ENCODE measurements at regions of chr9 and their contacts with region 1.

Region 1: DNA sequence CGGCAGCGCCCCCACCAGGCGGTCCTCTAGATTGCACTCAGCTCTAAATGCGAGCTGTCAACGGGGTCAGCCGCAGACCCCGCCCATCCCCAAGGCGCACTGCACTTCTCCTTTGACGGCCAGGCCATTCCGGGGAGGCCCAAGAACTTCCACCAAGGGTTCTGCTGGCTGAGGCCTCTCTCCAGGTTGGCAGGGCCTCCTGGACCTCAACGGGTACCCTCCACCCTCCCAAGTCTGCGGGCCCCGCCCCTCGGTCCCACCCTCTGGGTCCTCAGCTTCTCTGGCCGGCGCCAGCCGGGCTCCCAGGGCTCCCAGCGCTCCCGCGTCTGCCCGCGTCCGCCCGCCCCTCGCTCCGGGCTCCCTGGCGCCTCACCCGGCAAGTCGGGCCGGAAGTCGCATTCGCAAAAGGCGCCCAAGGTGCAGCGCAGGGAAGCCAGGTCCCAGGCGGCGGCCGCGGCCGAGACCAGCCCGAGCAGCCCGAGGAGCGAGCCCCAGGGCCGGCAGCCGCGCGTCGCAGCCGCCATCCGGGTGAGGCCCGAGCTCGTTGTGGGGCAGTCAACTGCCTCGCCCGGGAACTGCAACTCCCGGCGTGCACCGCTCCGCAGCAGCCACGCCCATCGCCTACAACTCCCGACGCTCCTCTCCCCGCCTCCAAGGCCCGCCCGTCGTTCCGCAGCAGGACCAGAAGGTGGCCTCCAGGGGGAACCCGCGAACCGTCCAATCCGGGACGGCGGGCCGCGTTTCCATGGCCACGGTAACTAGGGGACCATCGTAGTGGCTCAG is at the start of gene TOR2A:
- DNase-seq: peak; percentile 98 to 100 (median 99)
- H3K4me3 ChIP-seq: peak within 1 kb of the TSS; percentile 30 to 74
- H3K4me3 Mint-ChIP-seq: peak within 1 kb of the TSS; percentile 85 to 98 (median 92)
- H3K27ac ChIP-seq: peak within 1 kb of the TSS; percentile 80
- H3K27ac Mint-ChIP-seq: peak within 1 kb of the TSS; percentile 88 to 99 (median 97)
- H3K4me1 ChIP-seq: peaks cover 18% of the 10 kb centered on the region
- H3K4me1 Mint-ChIP-seq: peaks cover 7 to 27% (median 18%) of the 10 kb centered on the region in 4 donors
- H3K27me3 ChIP-seq: no peaks in the 10 kb centered on the region
- H3K27me3 Mint-ChIP-seq: no peaks in the 10 kb centered on the region
- total RNA-seq, gene TOR2A: 14.3 to 18.4 TPM

Region 2: DNA sequence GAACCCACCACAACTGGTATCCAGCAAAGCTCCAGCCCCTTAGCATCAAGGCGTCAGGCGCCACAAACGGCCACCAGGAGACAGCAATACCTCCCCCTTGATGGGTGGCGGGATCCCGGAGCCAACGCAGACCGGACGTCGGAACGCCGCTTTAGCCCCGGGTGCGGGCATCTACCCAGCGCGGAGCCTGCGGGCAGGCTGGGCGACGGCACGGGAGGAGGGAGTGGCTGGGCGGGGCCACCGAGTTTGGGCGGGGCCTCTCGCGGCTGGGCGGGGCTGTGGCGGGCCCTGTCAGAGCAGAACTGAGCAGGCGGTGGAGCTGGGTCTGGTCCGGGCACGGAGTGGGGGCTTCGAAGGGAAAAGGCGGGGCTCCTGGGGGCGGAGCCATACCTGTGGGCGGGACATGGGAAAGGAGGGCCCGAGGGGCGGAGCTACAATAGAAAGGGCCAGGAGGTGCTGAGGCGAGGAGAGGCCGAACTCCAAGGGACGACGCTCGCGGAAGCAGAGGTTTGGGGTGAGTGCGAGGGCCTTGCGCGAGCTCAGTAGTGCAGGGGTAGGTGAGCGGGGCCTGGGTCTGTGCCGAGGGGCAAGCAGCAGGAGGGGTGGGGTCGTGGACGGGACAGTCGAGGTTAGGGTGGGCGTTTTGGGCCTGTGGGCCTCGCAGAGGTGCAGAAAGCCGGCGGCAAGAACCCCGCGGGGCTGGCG is 510.6 kb before region 1 on chr9:
- CTCF ChIA-PET with region 1: no interaction called
- POLR2A ChIA-PET with region 1: no interaction called
- intact Hi-C with region 1: loop called (anchors 10 kb)
- DNase-seq: peak; percentile 86 to 90 (median 87)
- H3K4me3 ChIP-seq: peak overlapping the region in 1 of 2 donors; percentile 53
- H3K4me3 Mint-ChIP-seq: peak overlapping the region; percentile 77 to 90 (median 87)
- H3K27ac ChIP-seq: no peak overlapping the region
- H3K27ac Mint-ChIP-seq: peak overlapping the region; percentile 79 to 96 (median 93)
- H3K4me1 ChIP-seq: peaks cover 35% of the 10 kb centered on the region
- H3K4me1 Mint-ChIP-seq: peaks cover 23 to 48% (median 33%) of the 10 kb centered on the region in 4 donors
- H3K27me3 ChIP-seq: no peaks in the 10 kb centered on the region
- H3K27me3 Mint-ChIP-seq: peaks cover 0 to 6% of the 10 kb centered on the region in 2 donors

Region 3: DNA sequence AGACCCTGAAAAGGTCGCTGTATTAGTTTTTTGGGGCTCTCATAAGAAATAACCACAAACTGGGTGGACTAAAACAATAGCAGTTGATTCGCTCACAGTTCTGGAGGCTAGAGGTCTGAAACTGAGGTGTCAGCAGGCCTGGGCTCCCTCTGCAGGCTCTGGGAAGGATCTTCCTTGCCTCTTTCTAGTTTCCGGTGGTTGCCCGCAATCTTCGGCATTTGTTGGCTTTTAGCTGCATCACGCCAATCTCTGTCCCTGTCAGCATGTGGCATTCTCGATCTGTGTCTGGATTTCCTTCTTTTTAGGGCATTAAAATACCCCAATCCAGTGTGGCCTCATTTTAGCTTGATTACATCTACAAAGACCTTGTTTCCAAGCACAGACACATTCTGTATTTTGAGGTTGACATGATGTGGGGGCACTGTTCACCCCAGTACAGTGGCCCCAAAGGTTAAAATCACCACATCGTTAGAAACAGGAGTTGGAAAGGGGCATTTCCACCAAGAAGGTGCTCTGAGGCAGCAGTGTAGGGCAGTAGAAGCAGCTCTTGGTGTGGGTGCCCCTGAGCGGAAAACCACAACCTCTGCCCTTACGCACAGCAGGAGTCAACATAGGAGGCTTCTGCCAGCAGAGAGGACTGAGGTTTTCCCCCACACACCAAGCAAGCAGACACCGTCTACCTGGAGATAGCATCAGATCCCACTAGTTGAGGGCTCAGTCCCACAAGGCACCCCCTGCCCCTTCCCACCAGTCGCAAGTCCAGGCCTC is 297.3 kb before region 1 on chr9:
- CTCF ChIA-PET with region 1: no interaction called
- POLR2A ChIA-PET with region 1: no interaction called
- intact Hi-C with region 1: no loop called
- DNase-seq: peak; percentile 37 to 57 (median 51)
- H3K4me3 ChIP-seq: no peak overlapping the region
- H3K4me3 Mint-ChIP-seq: peak overlapping the region; percentile 3 to 74 (median 44)
- H3K27ac ChIP-seq: no peak overlapping the region
- H3K27ac Mint-ChIP-seq: peak overlapping the region; percentile 77 to 92 (median 84)
- H3K4me1 ChIP-seq: peaks cover 15% of the 10 kb centered on the region
- H3K4me1 Mint-ChIP-seq: peaks cover 14 to 21% (median 19%) of the 10 kb centered on the region in 4 donors
- H3K27me3 ChIP-seq: no peaks in the 10 kb centered on the region
- H3K27me3 Mint-ChIP-seq: no peaks in the 10 kb centered on the region

Region 4: DNA sequence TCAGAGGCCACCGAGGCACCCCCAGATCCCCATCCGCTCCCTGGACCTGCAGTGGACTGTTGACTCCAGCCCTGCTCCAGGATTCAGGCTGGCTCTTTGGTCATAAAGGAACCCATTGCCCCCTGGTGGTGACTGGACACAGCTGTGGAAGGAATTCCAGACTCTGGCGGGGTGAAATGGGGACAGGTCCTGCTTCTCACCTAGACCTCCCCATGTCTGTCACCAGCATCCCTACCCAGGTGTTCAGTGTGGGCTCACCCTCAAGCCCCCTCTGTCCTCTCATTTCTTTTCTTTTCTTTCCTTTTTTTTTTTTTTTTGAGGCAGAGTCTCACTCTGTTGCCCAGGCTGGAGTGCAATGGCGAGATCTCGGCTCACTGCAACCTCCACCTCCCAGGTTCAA is 148.4 kb before region 1 on chr9:
- CTCF ChIA-PET with region 1: interaction called, 85 read pairs
- POLR2A ChIA-PET with region 1: interaction called, 6 read pairs
- intact Hi-C with region 1: no loop called
- DNase-seq: peak; percentile 53 to 56 (median 56)
- H3K4me3 ChIP-seq: no peak overlapping the region
- H3K4me3 Mint-ChIP-seq: no peak overlapping the region
- H3K27ac ChIP-seq: no peak overlapping the region
- H3K27ac Mint-ChIP-seq: peak overlapping the region in 1 of 7 donors; percentile 76
- H3K4me1 ChIP-seq: no peaks in the 10 kb centered on the region
- H3K4me1 Mint-ChIP-seq: peaks cover 0 to 3% (median 2%) of the 10 kb centered on the region in 4 donors
- H3K27me3 ChIP-seq: no peaks in the 10 kb centered on the region
- H3K27me3 Mint-ChIP-seq: peaks cover 3 to 5% of the 10 kb centered on the region in 2 donors

Region 5: DNA sequence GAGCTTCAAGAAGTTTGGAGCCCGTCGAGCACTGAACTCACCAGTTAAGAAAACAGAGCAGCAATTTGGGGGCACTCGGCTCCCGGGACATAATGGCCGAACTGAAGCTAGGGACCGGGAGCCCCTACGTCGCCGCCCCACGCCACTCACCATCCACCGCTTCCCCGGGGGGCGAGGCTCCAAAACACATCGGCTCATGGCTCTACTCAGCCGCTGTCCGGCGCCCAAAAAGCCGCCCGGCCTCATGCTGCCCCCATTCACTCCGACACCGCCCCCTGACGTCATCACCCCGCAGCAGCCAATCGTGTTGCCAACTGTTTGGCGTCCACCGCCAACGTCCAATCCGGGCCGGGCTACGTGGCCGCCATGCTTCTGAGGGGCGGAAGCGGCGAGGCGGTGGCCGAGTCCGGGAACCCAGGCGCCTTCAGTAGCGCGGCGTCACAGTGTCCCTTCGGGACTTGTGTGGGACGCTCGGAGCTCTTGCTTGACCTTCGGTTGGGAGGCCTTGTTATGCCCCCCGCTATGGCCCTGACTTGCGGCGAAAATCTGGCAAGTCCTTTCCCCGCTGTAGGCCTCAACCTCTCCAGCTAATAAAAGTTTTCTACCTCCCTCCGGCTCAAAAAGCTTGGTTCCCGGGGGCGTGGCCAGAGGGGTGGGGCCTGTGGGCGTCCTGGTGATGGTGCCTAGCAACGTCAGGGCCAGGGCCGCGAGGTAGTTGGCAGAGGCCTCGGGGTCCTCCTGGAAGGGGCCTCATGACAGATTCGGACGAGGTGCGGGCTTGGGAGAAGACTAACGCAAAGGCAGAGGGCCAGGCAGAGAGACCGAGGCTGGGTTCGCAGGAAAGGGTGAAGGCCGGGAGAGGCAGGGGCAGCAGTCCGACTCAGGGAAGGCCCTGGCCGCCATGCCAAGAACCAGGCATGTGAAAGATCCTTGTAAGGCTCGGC is 19.3 kb before region 1 on chr9 and contains the starts of genes PTRH1 and TTC16:
- CTCF ChIA-PET with region 1: interaction called, 23 read pairs
- POLR2A ChIA-PET with region 1: interaction called, 39 read pairs
- intact Hi-C with region 1: loop called (anchors 1 kb)
- DNase-seq: peak; percentile 95 to 97 (median 96)
- H3K4me3 ChIP-seq: peak within 1 kb of the TSS; percentile 45 to 91
- H3K4me3 Mint-ChIP-seq: peak within 1 kb of the TSS; percentile 95 to 100 (median 99)
- H3K27ac ChIP-seq: peak within 1 kb of the TSS; percentile 71
- H3K27ac Mint-ChIP-seq: peak within 1 kb of the TSS; percentile 83 to 99 (median 98)
- H3K4me1 ChIP-seq: peaks cover 45% of the 10 kb centered on the region
- H3K4me1 Mint-ChIP-seq: peaks cover 26 to 41% (median 34%) of the 10 kb centered on the region in 4 donors
- H3K27me3 ChIP-seq: no peaks in the 10 kb centered on the region
- H3K27me3 Mint-ChIP-seq: no peaks in the 10 kb centered on the region
- total RNA-seq, gene PTRH1: 7.3 to 8.4 TPM
- total RNA-seq, gene TTC16: 2.5 to 2.6 TPM

Region 6: DNA sequence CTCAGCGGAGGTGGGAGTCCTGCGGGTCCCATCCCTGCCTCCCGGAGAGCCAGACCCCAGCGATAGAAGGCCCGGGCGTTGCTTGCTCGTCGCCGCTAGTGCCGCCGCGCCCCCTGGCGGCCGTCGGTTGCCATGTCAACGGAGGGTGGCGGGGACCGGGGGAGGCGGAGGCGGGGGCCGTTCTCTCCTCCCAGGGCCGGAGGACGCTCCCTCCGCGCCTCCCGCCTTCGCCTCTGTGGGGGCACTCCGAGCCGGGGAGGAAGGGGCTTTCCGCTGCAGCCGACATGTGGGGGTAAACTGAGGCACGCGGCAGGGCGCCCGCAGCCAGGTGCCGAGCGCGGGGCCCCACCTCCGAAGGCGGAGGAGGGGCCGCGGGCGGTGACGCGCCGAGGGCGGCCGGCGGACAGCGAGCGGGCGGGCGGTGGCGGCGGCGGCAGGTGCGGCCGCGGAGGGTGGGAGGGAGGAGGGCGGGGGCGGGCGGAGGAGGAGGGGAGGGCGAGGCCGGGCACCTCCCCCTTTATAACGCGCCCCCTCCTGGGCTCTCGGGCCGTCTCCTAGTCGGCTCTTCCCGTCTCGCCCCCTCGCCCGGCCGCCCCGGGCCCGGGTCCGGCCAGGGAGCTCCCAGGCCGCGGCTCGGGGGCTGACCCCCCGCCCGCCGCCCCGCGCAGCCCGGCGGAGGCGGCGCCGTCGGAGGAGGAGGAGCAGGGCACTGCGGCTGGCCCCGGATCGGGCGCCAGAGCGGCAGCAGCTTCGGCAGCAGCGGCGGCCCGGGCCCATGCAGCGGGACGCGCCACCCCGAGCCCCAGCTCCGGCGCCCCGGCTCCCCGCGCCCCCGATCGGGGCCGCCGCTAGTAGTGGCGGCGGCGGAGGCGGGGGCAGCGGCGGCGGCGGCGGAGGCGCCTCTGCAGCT is 50.3 kb after region 1 on chr9:
- CTCF ChIA-PET with region 1: interaction called, 43 read pairs
- POLR2A ChIA-PET with region 1: interaction called, 81 read pairs
- intact Hi-C with region 1: loop called (anchors 1 kb)
- DNase-seq: peak; percentile 89 to 93 (median 90)
- H3K4me3 ChIP-seq: peak overlapping the region in 1 of 2 donors; percentile 61
- H3K4me3 Mint-ChIP-seq: peak overlapping the region; percentile 80 to 93 (median 86)
- H3K27ac ChIP-seq: peak overlapping the region; percentile 86
- H3K27ac Mint-ChIP-seq: peak overlapping the region; percentile 93 to 99 (median 97)
- H3K4me1 ChIP-seq: peaks cover 68% of the 10 kb centered on the region
- H3K4me1 Mint-ChIP-seq: peaks cover 34 to 74% (median 49%) of the 10 kb centered on the region in 4 donors
- H3K27me3 ChIP-seq: no peaks in the 10 kb centered on the region
- H3K27me3 Mint-ChIP-seq: no peaks in the 10 kb centered on the region

Region 7: DNA sequence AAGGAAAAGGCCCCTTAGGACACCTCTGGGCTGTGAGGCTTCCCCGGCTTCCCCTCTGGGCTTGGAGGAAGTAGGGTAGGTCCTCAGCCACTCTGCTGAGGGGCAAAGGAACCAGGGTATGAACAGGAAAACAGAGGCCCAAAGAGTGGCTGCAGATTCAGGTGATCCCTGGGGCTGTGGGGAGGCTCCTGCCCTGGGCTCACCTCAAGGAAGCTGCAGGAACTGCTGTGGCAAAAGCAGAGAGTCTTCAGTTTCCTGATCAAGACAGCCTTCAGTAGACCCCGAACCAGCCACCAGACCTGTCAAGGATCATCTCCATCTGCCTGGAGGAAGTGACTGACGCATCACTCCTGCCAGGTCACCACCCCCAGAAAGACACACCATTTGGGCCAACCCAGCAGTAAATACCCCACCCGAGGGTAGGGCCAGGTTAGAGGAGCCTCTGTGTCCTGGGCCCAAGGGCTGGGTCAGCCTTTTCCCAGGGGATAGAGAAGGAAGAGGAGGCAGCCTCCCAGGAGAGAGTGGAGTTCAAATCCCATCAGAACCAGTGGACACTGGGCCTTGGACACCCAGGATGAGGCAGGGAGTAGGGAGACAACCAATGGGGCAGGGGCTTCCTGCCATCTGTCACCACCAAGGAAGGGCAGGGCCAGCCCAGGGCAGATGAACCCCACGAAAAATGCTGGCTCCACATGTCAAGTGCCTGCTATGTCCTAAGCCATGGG is 170.2 kb after region 1 on chr9:
- CTCF ChIA-PET with region 1: interaction called, 8 read pairs
- POLR2A ChIA-PET with region 1: interaction called, 14 read pairs
- intact Hi-C with region 1: loop called (anchors 1 kb)
- DNase-seq: peak; percentile 59 to 89 (median 61)
- H3K4me3 ChIP-seq: peak overlapping the region; percentile 82 to 85
- H3K4me3 Mint-ChIP-seq: peak overlapping the region; percentile 86 to 99 (median 95)
- H3K27ac ChIP-seq: peak overlapping the region; percentile 100
- H3K27ac Mint-ChIP-seq: peak overlapping the region; percentile 98 to 100 (median 100)
- H3K4me1 ChIP-seq: peaks cover 67% of the 10 kb centered on the region
- H3K4me1 Mint-ChIP-seq: peaks cover 16 to 60% (median 31%) of the 10 kb centered on the region in 4 donors
- H3K27me3 ChIP-seq: no peaks in the 10 kb centered on the region
- H3K27me3 Mint-ChIP-seq: no peaks in the 10 kb centered on the region

Region 8: DNA sequence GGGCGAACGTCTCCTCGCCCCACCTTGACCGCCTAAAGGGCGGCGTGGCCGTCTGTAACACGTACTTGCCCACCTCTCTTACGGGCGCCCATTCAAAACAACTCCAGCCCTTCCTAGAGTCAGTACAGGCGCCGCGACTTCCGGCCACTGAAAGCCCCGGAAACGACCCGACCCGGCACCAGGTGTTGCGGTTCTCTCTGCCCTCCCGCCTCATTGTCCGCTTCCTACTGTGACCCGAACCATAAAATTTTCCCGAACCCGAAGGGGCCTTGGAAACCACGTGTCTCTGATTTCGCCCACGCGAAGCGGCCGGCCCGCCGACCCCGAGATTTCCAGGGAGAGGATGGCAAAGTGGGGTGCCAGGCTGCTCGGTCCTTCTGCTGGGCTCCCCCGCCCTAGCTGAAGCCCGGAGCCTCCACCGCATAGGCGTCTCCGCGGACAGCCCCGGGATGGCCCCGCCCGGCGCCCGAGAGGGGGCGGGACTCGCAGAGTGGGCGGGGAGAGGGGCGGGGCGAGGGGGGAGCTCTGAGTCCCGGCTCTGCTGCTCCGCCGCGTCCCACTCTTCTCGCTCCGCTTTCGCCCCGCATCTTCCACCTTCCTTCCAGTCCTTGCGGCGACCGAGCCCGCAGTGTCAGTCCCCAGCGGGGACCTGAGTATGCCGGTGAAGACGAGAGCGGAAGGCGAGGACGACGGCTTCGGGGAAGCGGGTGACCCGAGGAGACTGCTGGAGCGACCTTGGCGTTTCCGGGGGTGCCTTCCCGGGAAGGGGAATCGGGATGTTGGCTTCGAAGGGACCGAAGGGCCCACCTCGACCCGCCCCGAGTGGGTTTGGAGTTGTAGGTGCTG is 393.3 kb after region 1 on chr9:
- CTCF ChIA-PET with region 1: no interaction called
- POLR2A ChIA-PET with region 1: no interaction called
- intact Hi-C with region 1: loop called (anchors 10 kb)
- DNase-seq: peak; percentile 90 to 94 (median 93)
- H3K4me3 ChIP-seq: peak overlapping the region; percentile 86 to 95
- H3K4me3 Mint-ChIP-seq: peak overlapping the region; percentile 96 to 100 (median 99)
- H3K27ac ChIP-seq: peak overlapping the region; percentile 81
- H3K27ac Mint-ChIP-seq: peak overlapping the region; percentile 98 to 100 (median 99)
- H3K4me1 ChIP-seq: peaks cover 37% of the 10 kb centered on the region
- H3K4me1 Mint-ChIP-seq: peaks cover 24 to 46% (median 33%) of the 10 kb centered on the region in 4 donors
- H3K27me3 ChIP-seq: no peaks in the 10 kb centered on the region
- H3K27me3 Mint-ChIP-seq: peaks cover 0 to 2% of the 10 kb centered on the region in 2 donors

Measured in CD4-positive, alpha-beta memory T cell (primary cell).